HepG2 (cell line): ENCODE measurements at regions of chr17 and their contacts with region 1.

Region 1: GRCh38 chr17:78628547-78629435 is 51.6 kb upstream of the DNAH17 start:
- DNase-seq: no peak
- ATAC-seq: no peak
- H3K4me3 ChIP-seq: no peak overlapping the region
- H3K27ac ChIP-seq: no peak overlapping the region
- H3K4me1 ChIP-seq: peaks cover 53% of the 10 kb centered on the region
- H3K27me3 ChIP-seq: peaks cover 0 to 5% of the 10 kb centered on the region in 2 experiments; a peak in 2 of 5 replicates
- CTCF ChIP-seq: no peak
- EP300 ChIP-seq: no peak
- POLR2A ChIP-seq: no peak
- RAD21 ChIP-seq: no peak

Region 2: GRCh38 chr17:78583091-78583490 is 45.7 kb before region 1 on chr17:
- CTCF ChIA-PET with region 1: no interaction called
- POLR2A ChIA-PET with region 1: no interaction called
- in situ Hi-C with region 1: no loop called
- intact Hi-C with region 1: no loop called
- DNase-seq: no peak
- ATAC-seq: peak; percentile 49; the same call in 2 of the 3 replicates
- H3K4me3 ChIP-seq: no peak overlapping the region
- H3K27ac ChIP-seq: no peak overlapping the region
- H3K4me1 ChIP-seq: peaks cover 38% of the 10 kb centered on the region
- H3K27me3 ChIP-seq: no peaks in the 10 kb centered on the region; a peak in 1 of 5 replicates
- CTCF ChIP-seq: no peak
- EP300 ChIP-seq: no peak
- POLR2A ChIP-seq: no peak
- RAD21 ChIP-seq: no peak

Region 3: GRCh38 chr17:78708510-78708973 is 79.8 kb after region 1 on chr17:
- CTCF ChIA-PET with region 1: interaction called, 3 read pairs
- POLR2A ChIA-PET with region 1: no interaction called
- in situ Hi-C with region 1: no loop called
- intact Hi-C with region 1: loop called (anchors 1 kb)
- DNase-seq: peak; percentile 85
- ATAC-seq: peak; percentile 99
- H3K4me3 ChIP-seq: no peak overlapping the region
- H3K27ac ChIP-seq: no peak overlapping the region
- H3K4me1 ChIP-seq: peaks cover 10% of the 10 kb centered on the region
- H3K27me3 ChIP-seq: no peaks in the 10 kb centered on the region
- CTCF ChIP-seq: peak; percentile 99
- EP300 ChIP-seq: peak; percentile 30 to 35; a peak in 1 of 4 replicates
- POLR2A ChIP-seq: no peak
- RAD21 ChIP-seq: peak; percentile 98